Activated CD4-positive, alpha-beta memory T cell treated with anti-CD3 and anti-CD28 coated beads for 36 hours (primary cell): ENCODE measurements at regions of chr3 and their contacts with region 1.

Region 1: DNA sequence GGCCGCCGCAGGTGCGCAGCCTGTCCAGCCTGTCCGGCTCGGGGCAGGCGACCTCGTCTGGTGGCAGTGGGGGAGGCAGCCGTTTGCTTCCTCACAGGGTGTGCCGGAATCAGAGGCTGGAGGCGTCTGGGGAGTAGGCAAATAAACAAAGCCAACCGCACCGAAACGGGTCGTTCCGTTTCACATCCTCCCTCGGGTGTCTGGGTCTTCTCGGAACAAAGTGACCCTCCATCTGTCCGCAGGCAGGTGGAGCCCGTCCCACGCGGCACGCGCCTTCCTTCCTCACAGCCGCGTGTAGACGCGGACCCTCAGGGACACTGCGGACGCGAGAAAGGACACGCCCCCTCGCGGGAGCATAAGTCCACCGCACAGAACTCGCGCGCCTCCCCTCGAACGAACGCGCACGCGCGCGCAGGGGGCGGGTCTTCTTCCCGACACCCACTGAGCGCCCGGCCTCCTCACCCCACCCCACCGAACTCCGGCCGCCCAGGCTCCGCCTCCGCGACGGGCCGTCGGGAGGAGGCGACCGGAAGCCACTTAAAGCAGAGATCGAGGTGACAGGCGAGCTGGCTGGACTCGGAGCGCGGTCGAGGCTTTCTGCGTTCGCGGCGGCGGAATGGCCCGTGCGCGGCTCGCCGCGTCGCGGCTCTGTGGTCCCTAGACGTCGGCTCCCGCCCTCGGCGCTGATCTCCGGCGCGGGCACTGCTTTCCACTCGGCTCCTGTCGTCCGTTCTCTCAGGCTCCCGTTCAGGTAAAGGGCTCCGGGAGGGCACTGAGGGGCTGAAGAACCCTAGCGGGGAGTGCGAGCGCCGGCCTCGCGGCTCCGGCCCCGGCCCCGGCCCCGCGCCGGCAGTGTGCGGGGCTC is at the start of gene TIPARP:
- DNase-seq: peak; percentile 99
- H3K4me3 Mint-ChIP-seq: peak within 1 kb of the TSS; percentile 90
- H3K27ac Mint-ChIP-seq: peak within 1 kb of the TSS; percentile 94
- H3K4me1 Mint-ChIP-seq: peaks cover 36% of the 10 kb centered on the region
- H3K27me3 Mint-ChIP-seq: no peaks in the 10 kb centered on the region
- total RNA-seq, gene TIPARP: 15.7 to 17.7 TPM

Region 2: DNA sequence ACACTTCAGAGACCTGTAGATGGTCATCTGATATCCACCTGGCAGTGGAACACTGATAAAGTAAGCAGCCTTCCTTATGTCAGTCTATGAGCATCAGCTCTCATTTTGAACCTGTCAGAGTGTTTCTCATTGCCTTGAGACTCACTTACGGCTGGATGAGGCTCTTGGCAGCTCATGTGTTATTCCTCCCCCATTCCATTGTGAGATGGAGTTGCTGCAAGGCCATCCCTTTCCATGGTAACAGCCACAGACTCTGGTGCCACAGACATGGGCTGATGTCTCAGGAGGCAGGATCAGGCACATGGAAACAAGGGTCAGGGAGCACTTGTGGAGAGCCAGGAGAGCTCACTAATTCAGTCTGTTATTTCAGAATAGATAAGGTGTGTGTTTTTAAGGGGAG is 542.0 kb before region 1 on chr3:
- CTCF ChIA-PET with region 1: no interaction called
- POLR2A ChIA-PET with region 1: no interaction called
- intact Hi-C with region 1: no loop called
- DNase-seq: no peak
- H3K4me3 Mint-ChIP-seq: no peak overlapping the region
- H3K27ac Mint-ChIP-seq: no peak overlapping the region
- H3K4me1 Mint-ChIP-seq: no peaks in the 10 kb centered on the region
- H3K27me3 Mint-ChIP-seq: peaks cover 8% of the 10 kb centered on the region

Region 3: DNA sequence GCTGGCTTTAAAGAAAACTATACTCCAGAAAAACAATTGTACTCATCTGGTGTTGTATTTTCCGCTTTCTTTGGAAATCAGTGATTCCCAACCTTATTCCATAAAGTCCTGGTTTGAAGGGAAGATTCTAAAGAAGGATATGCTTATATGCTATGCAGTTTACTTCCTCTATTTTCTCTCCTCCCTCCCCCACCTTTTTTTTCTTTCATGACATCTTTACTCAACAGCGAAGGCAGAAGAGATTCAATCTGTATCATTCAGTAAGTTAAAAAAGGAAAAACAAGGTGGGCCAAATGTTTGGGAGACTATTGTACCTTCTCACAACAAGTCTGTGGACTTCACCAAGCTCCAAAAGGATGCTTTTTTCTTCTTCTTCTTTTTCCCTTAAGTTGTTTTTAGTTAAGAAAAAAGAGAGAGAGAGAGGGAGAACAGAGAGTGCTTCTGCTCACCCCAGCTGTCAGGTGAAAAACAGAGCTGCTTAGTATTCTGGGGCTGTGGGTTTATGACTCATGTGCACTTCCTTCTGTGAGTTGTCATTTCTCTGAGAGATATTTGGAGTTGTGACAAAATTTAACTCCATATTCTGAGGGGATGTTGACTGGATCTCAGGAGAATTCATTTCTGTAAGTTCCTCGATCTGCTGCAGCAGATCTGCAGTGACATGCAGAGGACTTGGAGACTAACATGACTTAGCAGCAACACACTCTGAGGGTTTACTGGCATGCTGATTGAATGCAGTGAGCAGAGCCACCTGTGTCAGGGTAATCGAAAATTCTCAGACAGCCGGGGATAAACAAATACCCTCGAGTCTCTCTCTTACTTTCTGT is 190.1 kb before region 1 on chr3:
- CTCF ChIA-PET with region 1: no interaction called
- POLR2A ChIA-PET with region 1: no interaction called
- intact Hi-C with region 1: loop called (anchors 1 kb)
- DNase-seq: peak; percentile 62
- H3K4me3 Mint-ChIP-seq: peak overlapping the region; percentile 66
- H3K27ac Mint-ChIP-seq: peak overlapping the region; percentile 90
- H3K4me1 Mint-ChIP-seq: peaks cover 41% of the 10 kb centered on the region
- H3K27me3 Mint-ChIP-seq: no peaks in the 10 kb centered on the region

Region 4: GRCh38 chr3:156605686-156606605 is 68.3 kb before region 1 on chr3:
- CTCF ChIA-PET with region 1: interaction called, 4 read pairs
- POLR2A ChIA-PET with region 1: no interaction called
- intact Hi-C with region 1: loop called (anchors 1 kb)
- DNase-seq: no peak
- H3K4me3 Mint-ChIP-seq: peak overlapping the region; percentile 66
- H3K27ac Mint-ChIP-seq: no peak overlapping the region
- H3K4me1 Mint-ChIP-seq: peaks cover 28% of the 10 kb centered on the region
- H3K27me3 Mint-ChIP-seq: peaks cover 25% of the 10 kb centered on the region

Region 5: DNA sequence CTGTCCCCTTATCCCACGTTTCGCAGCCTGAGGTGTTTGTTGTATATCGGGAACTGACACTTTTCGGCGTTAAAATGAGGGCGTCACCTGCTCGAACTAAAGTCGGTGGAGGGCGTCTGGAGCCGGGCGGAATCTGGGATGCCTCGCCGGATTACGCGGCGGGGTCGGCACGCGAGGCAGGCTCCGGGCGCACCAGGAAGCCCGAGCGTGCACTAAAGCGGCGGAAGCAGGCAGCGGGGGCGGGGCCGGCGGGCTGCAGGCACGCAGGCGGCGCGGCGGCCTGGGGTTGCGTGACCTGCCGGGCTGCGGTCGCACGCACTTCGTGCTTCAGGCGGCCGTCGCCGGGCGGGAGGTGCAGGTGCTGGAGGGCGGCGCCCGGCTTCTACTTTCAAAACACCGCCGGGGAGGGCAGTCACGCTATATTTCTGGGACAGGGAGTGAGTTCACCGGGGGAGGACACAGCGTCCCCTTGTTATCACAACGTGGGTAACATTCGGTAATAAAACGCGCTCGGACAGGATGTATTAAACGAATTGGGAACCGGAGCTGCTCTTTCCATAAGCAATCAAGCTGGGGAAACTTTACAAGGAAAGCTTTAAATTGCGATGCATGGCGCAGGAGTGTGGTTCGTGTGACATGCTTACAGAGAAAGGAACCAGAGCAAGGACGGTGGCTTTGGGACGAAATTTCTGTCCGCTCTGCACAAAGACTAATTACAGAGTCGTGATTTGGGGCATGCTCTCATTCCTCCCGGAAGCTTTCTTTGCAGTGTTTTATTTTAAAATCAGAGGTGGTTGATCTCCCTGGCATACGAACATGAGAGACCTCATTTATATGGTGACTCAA is 142.7 kb after region 1 on chr3:
- CTCF ChIA-PET with region 1: interaction called, 10 read pairs
- POLR2A ChIA-PET with region 1: interaction called, 9 read pairs
- intact Hi-C with region 1: loop called (anchors 1 kb)
- DNase-seq: peak; percentile 92
- H3K4me3 Mint-ChIP-seq: peak overlapping the region; percentile 85
- H3K27ac Mint-ChIP-seq: peak overlapping the region; percentile 90
- H3K4me1 Mint-ChIP-seq: peaks cover 43% of the 10 kb centered on the region
- H3K27me3 Mint-ChIP-seq: no peaks in the 10 kb centered on the region

Region 6: GRCh38 chr3:157113832-157114505 is 439.7 kb after region 1 on chr3:
- CTCF ChIA-PET with region 1: no interaction called
- POLR2A ChIA-PET with region 1: no interaction called
- intact Hi-C with region 1: no loop called
- DNase-seq: no peak
- H3K4me3 Mint-ChIP-seq: no peak overlapping the region
- H3K27ac Mint-ChIP-seq: no peak overlapping the region
- H3K4me1 Mint-ChIP-seq: no peaks in the 10 kb centered on the region
- H3K27me3 Mint-ChIP-seq: peaks cover 4% of the 10 kb centered on the region

Region 7: GRCh38 chr3:157130467-157131251 is 456.4 kb after region 1 on chr3:
- CTCF ChIA-PET with region 1: interaction called, 27 read pairs
- POLR2A ChIA-PET with region 1: interaction called, 5 read pairs
- intact Hi-C with region 1: loop called (anchors 1 kb)
- DNase-seq: peak; percentile 84
- H3K4me3 Mint-ChIP-seq: peak overlapping the region; percentile 45
- H3K27ac Mint-ChIP-seq: peak overlapping the region; percentile 98
- H3K4me1 Mint-ChIP-seq: peaks cover 73% of the 10 kb centered on the region
- H3K27me3 Mint-ChIP-seq: no peaks in the 10 kb centered on the region

Region 8: DNA sequence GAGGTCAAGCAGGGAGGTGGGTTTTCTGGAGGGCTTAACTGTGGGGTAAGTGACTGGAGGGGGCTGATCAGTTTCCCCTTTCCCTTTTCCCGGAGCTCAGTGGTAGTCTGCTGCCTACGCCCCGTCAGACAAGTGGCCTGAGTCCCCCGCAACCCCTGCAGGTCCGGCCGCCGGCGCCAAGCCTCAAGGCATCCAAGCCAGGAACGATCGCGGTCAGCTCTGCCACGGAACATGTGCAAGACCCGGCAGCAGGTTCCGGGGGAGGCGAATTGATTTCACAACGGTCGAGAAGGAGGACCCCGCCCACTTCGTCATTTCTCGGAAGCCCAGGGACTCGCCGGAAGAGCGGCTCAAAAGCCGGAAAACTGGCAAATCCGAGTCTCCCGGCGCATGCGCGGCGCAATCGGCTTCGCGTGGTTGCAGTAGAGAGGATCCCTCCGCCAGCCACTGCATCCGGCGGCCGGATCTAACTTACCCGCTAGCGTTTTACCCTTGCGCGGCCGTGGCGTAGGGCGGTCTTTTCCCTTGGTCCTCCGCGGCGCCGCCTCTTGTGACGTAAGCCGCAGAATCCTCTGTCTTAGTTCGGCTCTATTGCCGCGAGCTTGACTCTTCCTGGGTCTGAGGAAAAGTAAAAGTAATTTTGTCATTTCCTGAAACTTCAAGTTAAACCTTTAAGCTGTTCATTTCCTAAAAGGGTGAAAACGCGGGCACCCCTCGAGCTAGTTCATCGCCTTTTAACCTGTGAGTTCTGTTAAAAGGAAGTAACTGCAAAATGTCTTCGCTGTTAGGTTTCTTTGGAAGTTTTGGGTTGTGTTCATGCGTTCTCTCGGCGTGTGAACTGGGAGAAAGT is 500.6 kb after region 1 on chr3:
- CTCF ChIA-PET with region 1: interaction called, 4 read pairs
- POLR2A ChIA-PET with region 1: interaction called, 7 read pairs
- intact Hi-C with region 1: loop called (anchors 1 kb)
- DNase-seq: peak; percentile 99
- H3K4me3 Mint-ChIP-seq: peak overlapping the region; percentile 89
- H3K27ac Mint-ChIP-seq: peak overlapping the region; percentile 99
- H3K4me1 Mint-ChIP-seq: peaks cover 25% of the 10 kb centered on the region
- H3K27me3 Mint-ChIP-seq: no peaks in the 10 kb centered on the region